Vagina (tissue), 2 donors: ENCODE measurements at regions of chr20 and their contacts with region 1.

Region 1: GRCh38 chr20:15446373-15446772 is 1109.0 kb upstream of the FLRT3 start:
- DNase-seq: no peak
- H3K4me3 ChIP-seq: no peak overlapping the region
- H3K27ac ChIP-seq: no peak overlapping the region
- H3K4me1 ChIP-seq: peaks cover 12% of the 10 kb centered on the region
- H3K27me3 ChIP-seq: no peaks in the 10 kb centered on the region
- CTCF ChIP-seq: no peak
- POLR2A ChIP-seq: no peak

Region 2: DNA sequence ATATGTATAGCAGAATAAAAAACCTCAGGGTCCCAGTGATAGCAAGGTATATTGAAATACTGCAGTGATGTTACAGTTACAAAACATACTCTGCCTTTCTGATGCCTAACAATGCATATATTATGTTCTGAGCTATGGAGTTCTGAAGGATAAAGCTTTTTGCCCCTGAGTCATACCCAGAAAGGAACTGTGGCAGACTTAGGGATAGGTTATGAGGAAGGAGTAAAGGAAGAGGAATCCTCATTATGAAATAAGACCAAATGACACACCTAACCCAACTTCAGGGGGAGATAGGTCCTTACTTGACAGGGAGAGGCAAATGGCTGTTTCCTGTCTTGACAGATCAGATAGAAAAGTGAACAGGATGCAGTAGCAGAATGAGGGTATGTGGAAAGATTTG is 168.3 kb before region 1 on chr20:
- intact Hi-C with region 1: no loop called
- DNase-seq: no peak
- H3K4me3 ChIP-seq: no peak overlapping the region
- H3K27ac ChIP-seq: no peak overlapping the region
- H3K4me1 ChIP-seq: no peaks in the 10 kb centered on the region
- H3K27me3 ChIP-seq: no peaks in the 10 kb centered on the region
- CTCF ChIP-seq: no peak
- POLR2A ChIP-seq: no peak

Region 3: DNA sequence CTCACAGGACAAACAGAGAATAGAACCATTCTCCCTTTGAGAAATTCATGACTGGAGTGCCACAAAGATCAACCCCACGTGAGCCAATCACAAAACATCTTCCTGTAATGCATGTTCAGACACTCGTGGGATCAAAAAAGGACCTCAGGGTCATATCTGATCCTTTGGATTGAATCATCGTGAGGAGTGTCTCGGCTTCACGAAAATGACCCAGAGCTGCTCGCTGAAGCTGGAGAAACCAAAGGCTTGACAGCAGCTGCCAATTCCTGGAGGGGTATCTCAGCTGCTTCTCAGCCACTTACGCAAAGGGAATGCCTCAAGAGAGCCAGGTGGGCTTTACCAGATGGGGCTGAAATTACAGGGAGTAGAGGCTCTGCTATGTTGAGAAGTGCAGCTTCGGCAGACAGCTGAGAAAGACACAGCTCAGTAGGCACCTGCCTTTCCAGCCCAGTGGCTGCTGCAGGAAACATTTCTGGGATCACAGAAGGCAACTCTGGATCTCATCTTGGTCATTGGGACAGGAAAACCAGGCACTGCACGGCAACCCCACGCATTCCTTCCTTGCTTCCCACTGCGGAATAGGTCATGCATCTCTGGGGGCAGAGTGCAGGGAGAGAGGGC is 313.7 kb after region 1 on chr20:
- intact Hi-C with region 1: loop called (anchors 10 kb)
- DNase-seq: no peak
- H3K4me3 ChIP-seq: no peak overlapping the region
- H3K27ac ChIP-seq: no peak overlapping the region
- H3K4me1 ChIP-seq: peaks cover 11% of the 10 kb centered on the region
- H3K27me3 ChIP-seq: no peaks in the 10 kb centered on the region
- CTCF ChIP-seq: no peak
- POLR2A ChIP-seq: no peak